H1 (cell line): ENCODE measurements at regions of chr3 and their contacts with region 1.

Region 1: GRCh38 chr3:128845778-128846485 is 33.5 kb upstream of the ACAD9 start:
- DNase-seq: peak; percentile 60 to 97
- H3K4me3 ChIP-seq: peak overlapping the region in 3 of 4 experiments; percentile 22 to 49 (median 36); a peak in 5 of 8 replicates
- H3K27ac ChIP-seq: no peak overlapping the region
- H3K4me1 ChIP-seq: peaks cover 0 to 11% (median 9%) of the 10 kb centered on the region in 4 experiments; a peak in 4 of 7 replicates
- H3K27me3 ChIP-seq: no peaks in the 10 kb centered on the region
- CTCF ChIP-seq: peak in 2 of 3 experiments; percentile 85 to 88; a peak in 3 of 4 replicates
- EP300 ChIP-seq: 0 out of 3 replicates have a peak, but pooled peaks of 1 of the 2 experiments have one; percentile 34
- POLR2A ChIP-seq: no peak
- RAD21 ChIP-seq: peak; percentile 49 to 59

Region 2: GRCh38 chr3:128813097-128813496 is 32.8 kb before region 1 on chr3:
- CTCF ChIA-PET with region 1: interaction called, 10 read pairs
- POLR2A ChIA-PET with region 1: no interaction called
- DNase-seq: no peak
- H3K4me3 ChIP-seq: no peak overlapping the region
- H3K27ac ChIP-seq: no peak overlapping the region
- H3K4me1 ChIP-seq: no peaks in the 10 kb centered on the region
- H3K27me3 ChIP-seq: no peaks in the 10 kb centered on the region; a peak in 1 of 7 replicates
- CTCF ChIP-seq: no peak
- EP300 ChIP-seq: no peak
- POLR2A ChIP-seq: no peak
- RAD21 ChIP-seq: no peak

Region 3: DNA sequence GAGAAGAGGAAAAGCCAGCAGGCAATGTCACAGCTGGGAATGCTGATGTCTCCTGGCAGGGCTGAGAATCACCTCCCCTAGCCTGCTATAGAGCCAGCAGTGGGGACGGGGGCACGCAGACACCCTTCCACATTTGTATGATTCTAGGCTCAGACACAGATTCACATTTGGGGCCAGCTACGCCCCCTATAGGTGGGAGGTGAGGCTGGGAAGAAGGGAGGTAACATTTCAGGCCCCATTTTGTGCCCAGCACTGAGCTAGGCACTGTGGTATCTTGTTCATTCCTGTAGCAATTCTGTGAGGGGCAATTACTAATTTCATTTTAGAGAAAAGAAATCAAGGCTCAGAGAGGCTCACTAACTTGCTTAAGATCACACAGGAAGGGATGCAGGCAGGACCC is 17.6 kb after region 1 on chr3:
- CTCF ChIA-PET with region 1: interaction called, 31 read pairs
- POLR2A ChIA-PET with region 1: no interaction called
- DNase-seq: peak in 1 of 2 experiments; percentile 54
- H3K4me3 ChIP-seq: no peak overlapping the region
- H3K27ac ChIP-seq: no peak overlapping the region
- H3K4me1 ChIP-seq: peaks cover 0 to 6% (median 0%) of the 10 kb centered on the region in 4 experiments; a peak in 1 of 7 replicates
- H3K27me3 ChIP-seq: no peaks in the 10 kb centered on the region
- CTCF ChIP-seq: peak; percentile 41 to 66 (median 64)
- EP300 ChIP-seq: no peak
- POLR2A ChIP-seq: no peak
- RAD21 ChIP-seq: peak; percentile 33 to 44

Region 4: DNA sequence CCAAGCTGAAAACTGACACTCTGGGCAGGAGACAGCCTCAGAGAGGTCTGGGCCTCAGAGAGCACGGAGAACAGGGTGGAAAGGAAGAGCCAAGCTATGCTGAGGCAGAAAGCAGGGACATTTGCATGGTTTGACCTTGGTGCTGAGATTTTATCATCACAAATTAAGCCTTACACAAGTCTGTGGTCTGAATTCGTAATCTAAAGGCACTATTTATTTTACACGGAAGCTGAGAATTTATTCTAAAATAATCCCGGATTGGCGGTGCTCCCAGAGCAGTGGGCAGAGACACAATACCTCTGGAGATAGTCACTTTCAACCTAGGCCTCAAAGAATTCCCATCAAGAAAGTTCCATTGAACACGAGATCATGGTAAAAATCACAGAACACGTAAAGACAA is 100.5 kb after region 1 on chr3:
- CTCF ChIA-PET with region 1: no interaction called
- POLR2A ChIA-PET with region 1: no interaction called
- DNase-seq: no peak
- H3K4me3 ChIP-seq: no peak overlapping the region
- H3K27ac ChIP-seq: no peak overlapping the region
- H3K4me1 ChIP-seq: no peaks in the 10 kb centered on the region
- H3K27me3 ChIP-seq: no peaks in the 10 kb centered on the region
- CTCF ChIP-seq: no peak
- EP300 ChIP-seq: no peak
- POLR2A ChIP-seq: no peak
- RAD21 ChIP-seq: no peak